Endothelial cell of umbilical vein (primary cell): ENCODE measurements at regions of chr15 and their contacts with region 1.

Region 1: DNA sequence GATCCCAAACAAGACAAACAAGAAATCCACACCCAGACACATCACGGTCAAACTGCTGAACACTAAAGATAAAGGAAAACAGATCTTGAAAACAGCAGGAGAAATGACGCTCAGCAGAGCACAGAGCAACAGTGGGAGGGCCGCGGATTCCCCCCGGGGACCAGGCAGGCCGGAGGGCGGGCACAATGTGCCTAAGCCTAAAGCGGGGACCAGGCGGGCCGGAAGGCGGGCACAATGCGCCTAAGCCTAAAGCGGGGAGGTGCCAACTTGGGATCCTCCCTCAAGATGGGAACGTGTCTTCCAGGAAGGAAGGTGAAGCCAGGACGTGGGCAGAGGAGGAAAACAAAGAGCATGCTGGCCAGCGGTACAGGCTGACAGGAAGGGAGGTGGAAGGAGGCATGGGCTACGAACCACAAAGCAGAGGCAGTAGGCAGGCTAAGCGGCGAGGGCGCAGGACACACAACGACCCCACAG is 31.1 kb downstream of the CYFIP1 start:
- DNase-seq: peak; percentile 78
- H3K4me3 ChIP-seq: no peak overlapping the region
- H3K27ac ChIP-seq: peak overlapping the region; percentile 2
- H3K4me1 ChIP-seq: peaks cover 21% of the 10 kb centered on the region
- H3K27me3 ChIP-seq: no peaks in the 10 kb centered on the region
- CTCF ChIP-seq: no peak
- POLR2A ChIP-seq: no peak

Region 2: GRCh38 chr15:22933641-22934061 is 15.5 kb before region 1 on chr15:
- CTCF ChIA-PET with region 1: interaction called, 5 read pairs
- POLR2A ChIA-PET with region 1: no interaction called
- dilution Hi-C with region 1: no loop called
- intact Hi-C with region 1: loop called (anchors 2 kb)
- DNase-seq: peak; percentile 58
- H3K4me3 ChIP-seq: no peak overlapping the region
- H3K27ac ChIP-seq: peak overlapping the region; percentile 71
- H3K4me1 ChIP-seq: peaks cover 4% of the 10 kb centered on the region
- H3K27me3 ChIP-seq: no peaks in the 10 kb centered on the region
- CTCF ChIP-seq: no peak
- POLR2A ChIP-seq: no peak

Region 3: DNA sequence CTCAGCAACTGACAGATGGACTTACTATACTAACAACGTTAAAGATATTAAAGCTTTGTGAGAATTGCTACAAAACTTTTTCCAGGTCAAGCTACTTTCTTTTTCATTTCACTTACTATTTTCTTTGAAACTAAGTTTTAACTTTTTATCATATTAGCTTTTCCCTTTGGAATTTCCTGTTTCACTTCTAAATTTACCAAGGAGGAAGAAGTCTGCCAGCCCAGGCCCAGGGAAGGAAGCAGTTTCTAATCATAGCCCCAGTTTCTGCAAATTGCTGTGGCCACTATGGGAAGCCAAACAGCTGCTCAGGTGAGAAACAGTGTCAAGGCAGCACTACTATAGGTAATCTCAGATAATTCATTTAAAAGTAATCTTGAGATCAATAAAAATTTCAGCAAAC is 12.7 kb after region 1 on chr15:
- CTCF ChIA-PET with region 1: interaction called, 3 read pairs
- POLR2A ChIA-PET with region 1: no interaction called
- dilution Hi-C with region 1: no loop called
- intact Hi-C with region 1: loop called (anchors 1 kb)
- DNase-seq: peak; percentile 66
- H3K4me3 ChIP-seq: peak overlapping the region in 1 of 3 experiments; percentile 4
- H3K27ac ChIP-seq: peak overlapping the region; percentile 45
- H3K4me1 ChIP-seq: peaks cover 33% of the 10 kb centered on the region
- H3K27me3 ChIP-seq: no peaks in the 10 kb centered on the region
- CTCF ChIP-seq: no peak
- POLR2A ChIP-seq: no peak

Region 4: GRCh38 chr15:22968366-22968765 is 19.3 kb after region 1 on chr15:
- CTCF ChIA-PET with region 1: interaction called, 3 read pairs
- POLR2A ChIA-PET with region 1: no interaction called
- dilution Hi-C with region 1: no loop called
- intact Hi-C with region 1: loop called (anchors 1 kb)
- DNase-seq: peak; percentile 81
- H3K4me3 ChIP-seq: no peak overlapping the region
- H3K27ac ChIP-seq: peak overlapping the region; percentile 86
- H3K4me1 ChIP-seq: peaks cover 28% of the 10 kb centered on the region
- H3K27me3 ChIP-seq: no peaks in the 10 kb centered on the region
- CTCF ChIP-seq: no peak
- POLR2A ChIP-seq: no peak

Region 5: GRCh38 chr15:22980189-22981050 is 31.3 kb after region 1 on chr15 and contains the start of gene CYFIP1:
- CTCF ChIA-PET with region 1: interaction called, 3 read pairs
- POLR2A ChIA-PET with region 1: no interaction called
- dilution Hi-C with region 1: no loop called
- intact Hi-C with region 1: loop called (anchors 1 kb)
- DNase-seq: peak; percentile 83
- H3K4me3 ChIP-seq: peak within 1 kb of the TSS; percentile 72 to 89 (median 80)
- H3K27ac ChIP-seq: peak within 1 kb of the TSS; percentile 36
- H3K4me1 ChIP-seq: peaks cover 9% of the 10 kb centered on the region
- H3K27me3 ChIP-seq: no peaks in the 10 kb centered on the region
- CTCF ChIP-seq: no peak
- POLR2A ChIP-seq: peak; percentile 53
- total RNA-seq, gene CYFIP1: 135 and 158 TPM in 2 replicates